K562 (cell line): ENCODE measurements at regions of chr3 and their contacts with region 1.

Region 1: DNA sequence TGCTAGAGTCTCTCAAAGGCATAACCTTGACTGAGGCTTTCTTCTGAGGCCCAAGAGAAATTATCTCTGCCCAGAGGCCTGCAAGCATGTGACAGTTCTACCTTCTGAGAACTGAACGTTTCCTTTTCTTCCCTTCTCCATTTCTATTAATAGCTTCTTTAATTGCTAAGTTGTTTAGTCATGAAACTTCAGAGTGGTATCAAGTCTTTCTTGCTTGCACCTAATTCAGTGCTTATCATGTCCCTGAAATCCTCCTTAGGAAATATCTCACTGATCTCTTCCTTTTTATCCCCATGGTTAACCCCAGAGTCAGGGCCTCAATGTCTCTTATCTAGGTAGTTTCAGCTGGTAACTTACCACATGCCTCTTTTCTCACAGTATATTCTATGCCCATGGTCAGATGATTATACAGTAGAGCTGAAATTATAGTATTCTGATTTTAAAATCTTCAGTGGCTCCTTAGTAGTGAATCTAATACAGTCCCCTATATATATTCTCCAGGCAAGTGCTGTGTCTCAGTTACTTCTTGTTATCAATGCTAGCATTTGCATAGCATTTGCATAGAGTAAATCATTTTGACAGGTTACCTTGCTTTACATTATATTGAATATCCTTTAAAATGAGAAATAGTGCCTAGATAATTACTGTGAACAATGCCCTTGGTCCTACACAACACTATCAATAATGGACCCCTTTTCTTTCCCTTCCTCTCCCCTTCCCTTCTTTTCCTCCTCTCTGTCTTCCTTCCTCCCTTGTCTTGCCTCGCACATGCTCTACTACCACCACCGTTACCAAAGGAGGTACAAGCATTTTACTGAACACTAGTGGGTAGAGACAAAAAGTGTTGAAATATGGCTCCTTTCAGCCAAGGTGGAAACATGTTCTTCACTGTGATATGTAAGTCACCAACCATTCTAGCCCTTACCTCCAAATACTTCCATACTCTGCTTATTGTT is 33.0 kb downstream of the KBTBD8 start:
- DNase-seq: peak in 2 of 4 experiments; percentile 41 to 69
- ATAC-seq: peak; percentile 67
- H3K4me3 ChIP-seq: no peak overlapping the region
- H3K27ac ChIP-seq: peak overlapping the region; percentile 63
- H3K4me1 ChIP-seq: peaks cover 15 to 28% of the 10 kb centered on the region in 2 experiments; a peak in 4 of 5 replicates
- H3K27me3 ChIP-seq: no peaks in the 10 kb centered on the region
- CTCF ChIP-seq: no peak
- EP300 ChIP-seq: peak; percentile 70
- POLR2A ChIP-seq: 0 out of 2 replicates have a peak, but pooled peaks have one; percentile 36
- RAD21 ChIP-seq: no peak; a peak in 1 of 4 replicates

Region 2: GRCh38 chr3:66693461-66694031 is 337.5 kb before region 1 on chr3:
- CTCF ChIA-PET with region 1: no interaction called
- POLR2A ChIA-PET with region 1: no interaction called
- in situ Hi-C with region 1: no loop called
- intact Hi-C with region 1: no loop called
- DNase-seq: no peak
- ATAC-seq: no peak
- H3K4me3 ChIP-seq: no peak overlapping the region
- H3K27ac ChIP-seq: no peak overlapping the region
- H3K4me1 ChIP-seq: no peaks in the 10 kb centered on the region
- H3K27me3 ChIP-seq: peaks cover 0 to 4% of the 10 kb centered on the region in 2 experiments; a peak in 2 of 5 replicates
- CTCF ChIP-seq: no peak
- EP300 ChIP-seq: no peak
- POLR2A ChIP-seq: no peak
- RAD21 ChIP-seq: no peak

Region 3: GRCh38 chr3:66923969-66924368 is 107.1 kb before region 1 on chr3:
- CTCF ChIA-PET with region 1: no interaction called
- POLR2A ChIA-PET with region 1: no interaction called
- in situ Hi-C with region 1: no loop called
- intact Hi-C with region 1: no loop called
- DNase-seq: no peak
- ATAC-seq: no peak
- H3K4me3 ChIP-seq: no peak overlapping the region
- H3K27ac ChIP-seq: no peak overlapping the region
- H3K4me1 ChIP-seq: no peaks in the 10 kb centered on the region
- H3K27me3 ChIP-seq: no peaks in the 10 kb centered on the region
- CTCF ChIP-seq: no peak
- EP300 ChIP-seq: no peak
- POLR2A ChIP-seq: no peak
- RAD21 ChIP-seq: no peak

Region 4: DNA sequence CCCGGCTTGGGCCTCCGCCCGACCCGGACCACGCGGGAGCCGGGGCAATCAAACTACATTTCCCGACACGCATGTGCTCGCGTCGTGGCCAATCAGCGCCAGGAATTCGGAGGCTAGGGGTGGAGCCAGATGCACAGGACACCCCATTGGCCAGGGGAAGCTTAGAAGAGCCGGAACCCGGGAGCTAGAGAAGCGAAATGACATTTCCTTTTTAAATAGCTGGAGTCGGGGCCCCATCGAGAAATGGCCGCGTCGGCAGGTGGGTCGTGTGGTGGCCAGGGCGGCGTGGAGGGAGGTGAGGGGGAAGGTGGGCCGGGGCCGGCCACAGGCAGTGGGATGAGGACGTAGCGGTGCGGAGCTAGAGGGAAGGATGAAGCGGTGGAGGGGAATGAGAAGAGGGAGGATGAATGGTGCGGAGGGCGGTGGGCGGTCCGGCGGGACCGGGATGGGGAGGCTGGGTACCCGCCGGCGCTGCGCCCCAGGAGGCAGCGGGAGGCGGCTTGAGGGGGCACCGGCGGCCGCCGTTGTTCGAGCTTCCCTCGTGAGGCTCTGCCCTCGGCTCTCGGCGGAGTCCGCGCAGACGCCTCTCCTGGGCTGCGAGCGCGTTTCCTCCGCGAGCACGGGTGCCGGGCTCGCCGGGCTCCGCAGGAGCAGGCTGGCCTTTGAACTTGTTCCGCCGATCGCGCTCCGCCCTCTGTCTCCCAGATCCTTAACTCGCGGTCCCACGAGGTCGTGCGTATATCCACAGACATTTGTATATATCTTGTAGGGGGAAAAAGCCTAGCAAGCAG is 32.8 kb before region 1 on chr3 and contains the start of gene KBTBD8:
- CTCF ChIA-PET with region 1: no interaction called
- POLR2A ChIA-PET with region 1: no interaction called
- in situ Hi-C with region 1: no loop called
- intact Hi-C with region 1: loop called (anchors 2 kb)
- DNase-seq: peak in 3 of 4 experiments; percentile 97 to 98 (median 97)
- ATAC-seq: peak; percentile 98
- H3K4me3 ChIP-seq: peak within 1 kb of the TSS; percentile 76
- H3K27ac ChIP-seq: peak within 1 kb of the TSS; percentile 79
- H3K4me1 ChIP-seq: peaks cover 4 to 8% of the 10 kb centered on the region in 2 experiments; a peak in 3 of 5 replicates
- H3K27me3 ChIP-seq: no peaks in the 10 kb centered on the region
- CTCF ChIP-seq: no peak
- EP300 ChIP-seq: no peak
- POLR2A ChIP-seq: peak; percentile 76
- RAD21 ChIP-seq: no peak
- polyA plus RNA-seq, gene KBTBD8: 2.8 to 3.7 TPM

Region 5: GRCh38 chr3:67017211-67017610 is 13.9 kb before region 1 on chr3:
- CTCF ChIA-PET with region 1: no interaction called
- POLR2A ChIA-PET with region 1: interaction called, 3 read pairs
- in situ Hi-C with region 1: no loop called
- intact Hi-C with region 1: loop called (anchors 2 kb)
- DNase-seq: peak; percentile 51 to 88 (median 66)
- ATAC-seq: peak; percentile 89
- H3K4me3 ChIP-seq: no peak overlapping the region
- H3K27ac ChIP-seq: no peak overlapping the region
- H3K4me1 ChIP-seq: peaks cover 23 to 43% of the 10 kb centered on the region in 2 experiments
- H3K27me3 ChIP-seq: no peaks in the 10 kb centered on the region
- CTCF ChIP-seq: no peak
- EP300 ChIP-seq: peak; percentile 87
- POLR2A ChIP-seq: no peak
- RAD21 ChIP-seq: no peak

Region 6: DNA sequence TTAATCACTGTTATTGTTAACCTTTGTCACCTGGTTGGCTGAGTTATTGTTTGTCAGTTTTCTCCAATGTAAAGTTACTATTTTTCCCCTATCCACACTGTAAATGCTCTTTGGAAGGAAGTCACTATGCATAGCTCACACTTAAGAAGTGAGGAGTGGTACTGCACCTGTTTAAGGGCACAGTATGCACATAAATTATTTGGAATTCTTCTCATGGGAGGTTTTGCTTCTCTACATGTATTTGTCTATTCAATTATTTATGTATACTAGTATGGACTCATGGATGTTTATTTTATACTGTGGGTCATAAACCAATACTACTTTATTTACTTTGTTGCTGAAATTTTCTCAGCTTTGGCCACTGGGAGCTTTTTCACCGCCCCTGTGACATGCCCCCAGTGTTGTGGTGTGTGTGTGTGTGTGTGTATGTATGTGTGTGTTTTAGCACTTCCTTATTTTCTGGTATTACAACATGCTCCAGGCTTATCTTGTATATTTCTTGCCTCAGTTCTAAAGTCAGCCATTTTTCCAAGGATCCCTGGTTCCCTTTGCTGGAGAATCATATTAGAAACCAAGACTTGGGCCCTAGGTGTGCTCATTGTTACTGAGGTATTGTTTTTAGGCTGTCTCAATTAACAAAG is 257.5 kb after region 1 on chr3:
- CTCF ChIA-PET with region 1: no interaction called
- POLR2A ChIA-PET with region 1: no interaction called
- in situ Hi-C with region 1: no loop called
- intact Hi-C with region 1: no loop called
- DNase-seq: no peak
- ATAC-seq: no peak
- H3K4me3 ChIP-seq: no peak overlapping the region
- H3K27ac ChIP-seq: no peak overlapping the region
- H3K4me1 ChIP-seq: no peaks in the 10 kb centered on the region
- H3K27me3 ChIP-seq: no peaks in the 10 kb centered on the region
- CTCF ChIP-seq: no peak
- EP300 ChIP-seq: no peak
- POLR2A ChIP-seq: no peak
- RAD21 ChIP-seq: no peak